OCI-LY7 (cell line): ENCODE measurements at regions of chr1 and their contacts with region 1.

Region 1: DNA sequence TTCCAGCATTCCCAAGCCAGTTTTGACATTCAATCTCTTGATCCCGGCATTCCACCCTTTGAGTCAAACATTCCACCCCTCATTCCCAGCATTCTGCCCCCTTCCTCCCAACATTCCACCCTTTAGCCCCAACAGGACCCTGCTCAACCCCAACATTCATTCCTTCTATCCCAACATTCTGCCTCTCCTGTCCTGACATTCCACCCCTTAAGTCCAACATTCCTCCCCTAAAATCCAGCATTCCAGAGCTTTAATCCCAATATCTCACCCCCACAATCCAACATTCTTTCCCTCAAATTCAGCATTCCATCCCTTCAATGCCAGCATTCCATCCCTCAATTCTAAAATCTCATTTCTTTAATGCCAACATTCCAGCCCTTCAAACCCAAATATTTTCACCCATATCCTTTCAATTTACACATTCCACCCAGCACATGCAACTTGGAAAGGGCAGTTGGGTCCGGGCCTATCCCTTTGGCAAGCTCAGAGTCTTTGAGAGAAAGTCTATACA is 22.9 kb downstream of the DDX20 start:
- DNase-seq: no peak
- H3K4me3 ChIP-seq: no peak overlapping the region
- H3K27ac ChIP-seq: no peak overlapping the region
- H3K4me1 ChIP-seq: no peaks in the 10 kb centered on the region
- CTCF ChIP-seq: no peak

Region 2: GRCh38 chr1:111679541-111679940 is 99.1 kb before region 1 on chr1:
- CTCF ChIA-PET with region 1: no interaction called
- POLR2A ChIA-PET with region 1: interaction called, 10 read pairs
- intact Hi-C with region 1: no loop called
- DNase-seq: no peak
- H3K4me3 ChIP-seq: no peak overlapping the region
- H3K27ac ChIP-seq: no peak overlapping the region
- H3K4me1 ChIP-seq: no peaks in the 10 kb centered on the region
- CTCF ChIP-seq: no peak

Region 3: DNA sequence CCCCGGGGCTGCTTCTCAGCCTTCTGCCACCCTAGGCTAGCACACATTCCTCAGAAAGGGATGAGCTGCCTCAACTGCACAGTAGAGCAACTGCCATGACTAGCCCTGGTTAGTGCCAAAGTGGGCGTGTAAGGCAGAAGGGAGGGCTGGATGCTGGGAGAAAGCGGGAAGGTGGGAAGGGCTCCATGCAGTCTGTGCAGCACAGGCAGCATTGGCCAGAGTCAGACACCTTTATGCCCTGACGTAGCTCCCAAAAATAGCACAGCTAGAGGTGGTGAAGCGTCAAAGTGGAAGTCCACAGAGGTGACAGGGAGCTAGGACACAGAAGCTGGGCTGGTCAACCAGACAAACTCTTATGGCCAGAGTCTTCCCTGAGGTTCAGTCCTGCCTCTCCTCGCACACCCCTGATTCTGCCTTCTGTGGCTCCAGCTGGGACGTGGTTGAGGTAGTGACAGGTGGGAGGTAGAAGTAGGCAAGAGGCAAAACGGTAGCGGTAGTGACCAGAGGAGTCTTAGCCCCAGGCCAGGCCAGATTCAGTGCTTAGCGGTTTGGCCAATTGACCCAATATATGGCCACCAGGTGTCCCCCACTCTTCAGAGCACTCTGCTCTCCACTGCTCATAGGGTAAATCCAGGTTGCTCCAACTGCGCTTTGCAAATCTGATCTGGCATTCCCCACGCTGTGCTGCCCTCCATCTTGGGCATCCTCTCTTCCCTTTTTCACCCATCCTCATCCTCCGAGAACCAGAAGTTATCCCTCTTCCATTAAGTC is 22.7 kb after region 1 on chr1:
- CTCF ChIA-PET with region 1: no interaction called
- POLR2A ChIA-PET with region 1: no interaction called
- intact Hi-C with region 1: no loop called
- DNase-seq: no peak
- H3K4me3 ChIP-seq: no peak overlapping the region
- H3K27ac ChIP-seq: no peak overlapping the region
- H3K4me1 ChIP-seq: no peaks in the 10 kb centered on the region
- CTCF ChIP-seq: no peak

Region 4: GRCh38 chr1:112209488-112209887 is 430.9 kb after region 1 on chr1:
- CTCF ChIA-PET with region 1: no interaction called
- POLR2A ChIA-PET with region 1: no interaction called
- intact Hi-C with region 1: no loop called
- DNase-seq: no peak
- H3K4me3 ChIP-seq: no peak overlapping the region
- H3K27ac ChIP-seq: no peak overlapping the region
- H3K4me1 ChIP-seq: no peaks in the 10 kb centered on the region
- CTCF ChIP-seq: no peak